ENCODE measurements at regions of chr3 and their contacts with region 1.

Region 1: DNA sequence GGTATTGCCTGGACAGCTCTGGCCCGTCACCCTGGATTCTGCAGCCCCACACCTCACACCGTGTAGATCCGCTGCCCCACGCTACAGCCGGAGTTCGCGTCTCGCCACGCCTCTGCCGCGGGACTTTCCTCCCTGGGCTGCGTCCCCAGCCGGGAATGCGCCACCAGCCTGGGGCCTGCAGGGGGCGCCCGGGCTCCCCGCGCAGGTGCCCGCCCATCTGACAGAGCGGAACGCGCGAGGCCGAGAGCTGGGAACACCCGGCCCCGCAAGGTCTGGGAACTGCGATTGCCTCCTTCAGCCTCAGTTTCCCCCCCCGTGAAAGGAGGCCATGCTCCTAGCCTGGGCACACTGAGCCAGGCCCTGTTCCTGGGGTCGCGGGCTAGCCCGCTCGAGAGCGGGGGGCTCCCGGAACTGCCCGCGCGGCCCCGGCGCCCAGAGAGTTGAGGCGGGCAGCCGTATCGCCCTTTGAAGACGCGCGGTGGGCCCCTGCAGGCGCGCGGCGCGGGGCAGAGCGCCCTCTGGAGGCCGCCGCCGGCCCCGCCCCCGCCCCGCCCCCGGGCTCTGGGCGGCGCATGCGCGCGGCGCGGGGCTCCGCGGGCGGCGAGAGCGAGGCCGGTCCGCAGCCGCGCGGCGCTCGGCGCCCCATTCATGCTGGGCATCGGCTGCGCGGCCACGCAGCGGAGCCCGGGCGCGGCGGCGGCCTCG is at the start of gene PLXNA1:
- DNase-seq: peak; percentile 88
- H3K4me3 Mint-ChIP-seq: peak within 1 kb of the TSS; percentile 71
- H3K27ac Mint-ChIP-seq: peak within 1 kb of the TSS; percentile 77
- H3K4me1 Mint-ChIP-seq: peaks cover 23% of the 10 kb centered on the region
- H3K27me3 Mint-ChIP-seq: peaks cover 50% of the 10 kb centered on the region

Region 2: GRCh38 chr3:126752303-126752842 is 230.2 kb before region 1 on chr3:
- CTCF ChIA-PET with region 1: interaction called, 22 read pairs
- DNase-seq: peak; percentile 72
- H3K4me3 Mint-ChIP-seq: no peak overlapping the region
- H3K27ac Mint-ChIP-seq: no peak overlapping the region
- H3K4me1 Mint-ChIP-seq: peaks cover 6% of the 10 kb centered on the region
- H3K27me3 Mint-ChIP-seq: no peaks in the 10 kb centered on the region